MCF 10A (cell line): ENCODE measurements at regions of chr11 and their contacts with region 1.

Region 1: GRCh38 chr11:62726915-62727763 is at the start of gene HNRNPUL2:
- DNase-seq: peak; percentile 97
- H3K4me3 Mint-ChIP-seq: peak within 1 kb of the TSS; percentile 92
- H3K27ac Mint-ChIP-seq: peak within 1 kb of the TSS; percentile 97
- H3K4me1 Mint-ChIP-seq: peaks cover 16% of the 10 kb centered on the region
- H3K27me3 Mint-ChIP-seq: no peaks in the 10 kb centered on the region
- CTCF ChIP-seq: no peak
- total RNA-seq, gene HNRNPUL2: 36.4 and 36.6 TPM in 2 replicates

Region 2: DNA sequence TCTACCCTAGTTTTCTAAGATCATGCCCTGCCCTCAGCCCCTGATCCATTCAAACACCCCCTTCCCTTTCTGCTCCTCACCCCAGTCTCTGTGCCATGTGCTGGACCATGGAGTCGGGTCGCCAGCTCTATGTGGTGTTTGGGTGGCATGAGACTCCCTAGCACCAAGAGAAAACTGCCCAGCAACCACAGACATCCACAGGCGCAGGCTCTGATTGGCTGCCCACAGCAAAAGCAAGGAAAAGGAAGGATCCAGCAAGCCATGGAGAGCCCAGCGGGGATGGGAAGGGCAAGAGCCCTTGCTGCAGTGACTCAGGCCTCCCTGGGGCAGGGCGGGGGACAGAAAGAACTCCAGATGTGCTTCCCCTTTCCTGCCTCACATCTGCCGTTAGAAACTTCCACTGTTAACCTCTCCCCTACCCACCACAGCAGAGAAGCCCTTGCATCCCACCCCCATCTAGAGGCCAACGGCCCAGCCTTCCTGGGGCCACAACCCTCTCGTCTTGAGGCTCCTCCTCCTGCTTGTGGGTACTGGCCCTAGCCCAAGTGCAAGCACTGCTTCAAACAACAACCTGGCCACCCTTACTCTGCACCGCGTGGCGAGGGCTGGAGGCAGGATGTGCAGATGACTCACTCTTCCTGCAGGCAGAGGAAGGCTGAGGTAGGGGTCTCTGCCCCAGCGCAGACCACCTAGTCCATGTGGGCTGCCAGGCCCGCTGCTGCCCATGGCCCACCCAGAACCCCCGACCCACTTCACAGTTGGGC is 170.8 kb before region 1 on chr11:
- CTCF ChIA-PET with region 1: interaction called, 3 read pairs
- POLR2A ChIA-PET with region 1: interaction called, 24 read pairs
- intact Hi-C with region 1: no loop called
- DNase-seq: peak; percentile 97
- H3K4me3 Mint-ChIP-seq: peak overlapping the region; percentile 70
- H3K27ac Mint-ChIP-seq: peak overlapping the region; percentile 95
- H3K4me1 Mint-ChIP-seq: peaks cover 66% of the 10 kb centered on the region
- H3K27me3 Mint-ChIP-seq: no peaks in the 10 kb centered on the region
- CTCF ChIP-seq: no peak

Region 3: DNA sequence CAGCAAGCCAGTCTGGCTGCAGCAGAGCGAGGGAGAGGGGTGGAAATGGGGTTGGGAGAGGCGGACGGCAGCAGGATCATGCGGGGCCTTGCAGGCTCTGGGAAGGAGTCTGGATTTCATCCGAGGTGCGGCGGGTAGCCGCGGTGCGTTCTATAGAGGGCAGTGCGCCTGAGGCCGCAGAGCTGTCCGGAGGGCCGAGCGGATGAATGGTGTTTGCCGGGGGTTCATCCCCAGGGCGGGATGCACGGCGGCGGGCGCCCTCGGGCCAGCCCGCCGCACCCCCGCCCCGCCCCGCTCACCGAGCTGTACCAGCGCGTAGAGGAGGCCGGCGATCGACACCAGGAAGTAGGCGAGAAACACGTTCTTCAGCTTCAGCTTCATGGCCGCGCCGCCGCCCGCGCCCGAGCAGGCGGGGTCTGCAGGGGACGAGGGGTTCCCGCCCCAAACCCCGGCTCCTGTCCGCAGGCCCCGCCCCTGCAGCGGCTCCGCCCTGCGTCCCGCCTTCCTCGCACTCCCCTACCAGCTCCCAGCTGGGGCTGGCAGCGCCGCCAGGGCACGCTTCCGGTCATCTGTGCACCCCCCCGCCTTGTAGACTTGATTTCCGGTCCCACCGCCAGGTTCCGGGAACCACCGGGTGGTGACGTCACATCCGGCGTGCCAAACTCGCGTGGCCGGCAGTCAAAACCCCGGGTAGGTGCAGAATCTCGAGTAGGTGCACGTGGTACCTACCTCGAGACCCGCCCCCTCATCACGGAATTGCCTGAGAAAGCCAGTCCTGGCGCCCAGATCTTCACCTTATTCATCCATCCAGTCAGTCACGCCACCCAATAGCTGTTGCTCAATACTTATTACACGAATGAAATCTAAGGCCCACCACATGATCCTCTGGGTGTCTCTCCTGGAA is 105.3 kb before region 1 on chr11 and contains the start of gene B3GAT3:
- CTCF ChIA-PET with region 1: no interaction called
- POLR2A ChIA-PET with region 1: interaction called, 34 read pairs
- intact Hi-C with region 1: no loop called
- DNase-seq: peak; percentile 98
- H3K4me3 Mint-ChIP-seq: peak within 1 kb of the TSS; percentile 97
- H3K27ac Mint-ChIP-seq: peak within 1 kb of the TSS; percentile 92
- H3K4me1 Mint-ChIP-seq: peaks cover 12% of the 10 kb centered on the region
- H3K27me3 Mint-ChIP-seq: no peaks in the 10 kb centered on the region
- CTCF ChIP-seq: no peak
- total RNA-seq, gene B3GAT3: 40.1 and 42.4 TPM in 2 replicates

Region 4: GRCh38 chr11:62689421-62690183 is 37.5 kb before region 1 on chr11 and contains the start of gene LRRN4CL:
- CTCF ChIA-PET with region 1: interaction called, 4 read pairs
- POLR2A ChIA-PET with region 1: interaction called, 12 read pairs
- intact Hi-C with region 1: no loop called
- DNase-seq: peak; percentile 83
- H3K4me3 Mint-ChIP-seq: no peak within 1 kb of the TSS
- H3K27ac Mint-ChIP-seq: peak within 1 kb of the TSS; percentile 86
- H3K4me1 Mint-ChIP-seq: peaks cover 19% of the 10 kb centered on the region
- H3K27me3 Mint-ChIP-seq: no peaks in the 10 kb centered on the region
- CTCF ChIP-seq: no peak
- total RNA-seq, gene LRRN4CL: 0.42 and 0.81 TPM in 2 replicates

Region 5: GRCh38 chr11:62771144-62772021 is 44.2 kb after region 1 on chr11 and contains the start of gene TAF6L:
- CTCF ChIA-PET with region 1: interaction called, 4 read pairs
- POLR2A ChIA-PET with region 1: interaction called, 67 read pairs
- intact Hi-C with region 1: loop called (anchors 2 kb)
- DNase-seq: peak; percentile 98
- H3K4me3 Mint-ChIP-seq: peak within 1 kb of the TSS; percentile 98
- H3K27ac Mint-ChIP-seq: peak within 1 kb of the TSS; percentile 95
- H3K4me1 Mint-ChIP-seq: peaks cover 5% of the 10 kb centered on the region
- H3K27me3 Mint-ChIP-seq: no peaks in the 10 kb centered on the region
- CTCF ChIP-seq: no peak
- total RNA-seq, gene TAF6L: 11.6 and 12.0 TPM in 2 replicates

Region 6: GRCh38 chr11:62831520-62832335 is 104.6 kb after region 1 on chr11 and contains the start of gene STX5:
- CTCF ChIA-PET with region 1: no interaction called
- POLR2A ChIA-PET with region 1: interaction called, 22 read pairs
- intact Hi-C with region 1: no loop called
- DNase-seq: peak; percentile 98
- H3K4me3 Mint-ChIP-seq: peak within 1 kb of the TSS; percentile 89
- H3K27ac Mint-ChIP-seq: peak within 1 kb of the TSS; percentile 99
- H3K4me1 Mint-ChIP-seq: peaks cover 31% of the 10 kb centered on the region
- H3K27me3 Mint-ChIP-seq: no peaks in the 10 kb centered on the region
- CTCF ChIP-seq: no peak
- total RNA-seq, gene STX5: 71.8 and 72.0 TPM in 2 replicates

Region 7: GRCh38 chr11:62860835-62861563 is 133.9 kb after region 1 on chr11:
- CTCF ChIA-PET with region 1: interaction called, 4 read pairs
- POLR2A ChIA-PET with region 1: interaction called, 138 read pairs
- intact Hi-C with region 1: loop called (anchors 2 kb)
- DNase-seq: no peak
- H3K4me3 Mint-ChIP-seq: no peak overlapping the region
- H3K27ac Mint-ChIP-seq: no peak overlapping the region
- H3K4me1 Mint-ChIP-seq: peaks cover 23% of the 10 kb centered on the region
- H3K27me3 Mint-ChIP-seq: no peaks in the 10 kb centered on the region
- CTCF ChIP-seq: no peak